Activated T-helper 1 cell treated with anti-CD3 and anti-CD28 coated beads, Interleukin-12 subunit alpha, Interleukin-12 subunit beta, Interleukin-2, Interleukin-4 antibody, amounts not matched to agents 30 ng/mL and 10 ng/mL and 1 ng/mL, durations not matched to agents 14 hours and 24 hours and 36 hours (primary cell): ENCODE measurements at regions of chr5 and their contacts with region 1.

Region 1: DNA sequence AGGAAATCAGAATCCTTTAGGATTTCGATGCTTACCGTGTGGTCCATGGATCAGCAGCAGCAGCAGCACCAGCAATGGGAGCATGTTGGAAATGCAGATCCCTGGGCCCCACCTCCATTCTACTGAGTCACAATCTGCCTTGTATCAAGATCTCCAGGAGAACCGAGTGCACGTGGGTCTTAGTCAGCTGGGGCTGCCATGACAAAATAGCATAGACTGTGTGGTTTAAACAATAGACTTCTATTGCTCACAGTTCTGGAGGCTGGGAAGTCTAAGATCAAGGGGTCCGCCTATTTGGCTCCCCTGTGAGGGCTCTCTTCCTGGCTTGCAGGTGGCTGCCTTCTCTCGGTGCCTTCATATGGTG is 1.2 kb upstream of the PROP1 start:
- DNase-seq: no peak
- H3K4me3 Mint-ChIP-seq: no peak overlapping the region
- H3K27ac Mint-ChIP-seq: no peak overlapping the region
- H3K4me1 Mint-ChIP-seq: no peaks in the 10 kb centered on the region
- H3K27me3 Mint-ChIP-seq: peaks cover 30% of the 10 kb centered on the region

Region 2: GRCh38 chr5:178069909-178070308 is 72.6 kb after region 1 on chr5:
- intact Hi-C with region 1: loop called (anchors 5 kb)
- DNase-seq: no peak
- H3K4me3 Mint-ChIP-seq: no peak overlapping the region
- H3K27ac Mint-ChIP-seq: no peak overlapping the region
- H3K4me1 Mint-ChIP-seq: no peaks in the 10 kb centered on the region
- H3K27me3 Mint-ChIP-seq: peaks cover 2% of the 10 kb centered on the region